Panc1 (cell line): ENCODE measurements at regions of chr2 and their contacts with region 1.

Region 1: DNA sequence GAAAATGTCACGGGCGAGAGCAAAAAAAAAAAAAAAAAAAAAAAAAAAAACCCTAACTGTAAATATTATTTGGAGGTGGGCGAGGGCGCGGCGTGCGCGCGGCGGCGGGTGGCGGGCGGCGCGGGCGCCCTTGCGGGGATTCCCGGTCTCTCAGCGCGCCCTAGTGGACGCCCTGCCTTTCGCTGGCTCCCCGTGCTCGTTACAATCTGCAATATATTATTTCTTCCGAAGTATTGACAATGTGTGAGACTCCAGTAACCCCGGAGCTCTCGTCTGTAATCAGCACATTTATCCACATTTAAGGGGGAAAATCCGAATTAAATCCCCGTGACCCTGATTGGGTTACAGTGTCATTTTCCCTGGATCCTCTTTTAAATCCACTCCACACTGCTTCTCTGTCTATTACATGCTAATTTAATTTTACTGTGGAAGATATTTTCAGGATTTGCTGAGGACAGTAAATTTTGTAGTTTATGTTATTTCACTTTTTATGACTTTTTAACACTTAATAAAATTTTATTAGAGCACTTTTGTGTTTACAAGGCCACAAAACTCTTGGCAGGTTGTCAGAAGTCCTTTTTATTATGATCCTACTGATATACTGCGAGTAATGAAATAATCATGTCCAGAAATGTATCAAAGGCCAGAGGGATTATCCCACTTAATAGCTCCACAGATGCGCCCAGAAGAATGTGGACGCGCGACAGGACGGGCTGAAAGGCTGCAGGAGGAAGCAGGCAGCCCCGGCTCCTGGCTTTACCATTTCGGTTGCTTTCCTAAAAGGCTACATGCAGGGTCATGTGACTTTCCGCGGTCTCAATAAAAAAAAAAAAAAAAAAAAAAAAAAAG is 369.1 kb downstream of the MTX2 start:
- DNase-seq: no peak
- ATAC-seq: peak; percentile 90
- H3K4me3 ChIP-seq: peak overlapping the region; percentile 65 to 66
- H3K27ac ChIP-seq: peak overlapping the region; percentile 79
- H3K4me1 ChIP-seq: no peaks in the 10 kb centered on the region
- H3K27me3 ChIP-seq: no peaks in the 10 kb centered on the region; the same call in 1 of the 2 replicates
- CTCF ChIP-seq: peak; percentile 92

Region 2: GRCh38 chr2:175523001-175523400 is 1115.4 kb before region 1 on chr2:
- CTCF ChIA-PET with region 1: no interaction called
- POLR2A ChIA-PET with region 1: no interaction called
- in situ Hi-C with region 1: no loop called
- intact Hi-C with region 1: no loop called
- DNase-seq: no peak
- ATAC-seq: no peak
- H3K4me3 ChIP-seq: no peak overlapping the region
- H3K27ac ChIP-seq: no peak overlapping the region
- H3K4me1 ChIP-seq: no peaks in the 10 kb centered on the region
- H3K27me3 ChIP-seq: no peaks in the 10 kb centered on the region
- CTCF ChIP-seq: no peak

Region 3: GRCh38 chr2:176135034-176135440 is 503.4 kb before region 1 on chr2:
- CTCF ChIA-PET with region 1: interaction called, 5 read pairs
- POLR2A ChIA-PET with region 1: interaction called, 22 read pairs
- in situ Hi-C with region 1: no loop called
- intact Hi-C with region 1: loop called (anchors 2 kb)
- DNase-seq: no peak
- ATAC-seq: no peak
- H3K4me3 ChIP-seq: no peak overlapping the region
- H3K27ac ChIP-seq: peak overlapping the region; percentile 77
- H3K4me1 ChIP-seq: peaks cover 15% of the 10 kb centered on the region
- H3K27me3 ChIP-seq: no peaks in the 10 kb centered on the region
- CTCF ChIP-seq: peak; percentile 29; the same call in 1 of the 2 replicates

Region 4: DNA sequence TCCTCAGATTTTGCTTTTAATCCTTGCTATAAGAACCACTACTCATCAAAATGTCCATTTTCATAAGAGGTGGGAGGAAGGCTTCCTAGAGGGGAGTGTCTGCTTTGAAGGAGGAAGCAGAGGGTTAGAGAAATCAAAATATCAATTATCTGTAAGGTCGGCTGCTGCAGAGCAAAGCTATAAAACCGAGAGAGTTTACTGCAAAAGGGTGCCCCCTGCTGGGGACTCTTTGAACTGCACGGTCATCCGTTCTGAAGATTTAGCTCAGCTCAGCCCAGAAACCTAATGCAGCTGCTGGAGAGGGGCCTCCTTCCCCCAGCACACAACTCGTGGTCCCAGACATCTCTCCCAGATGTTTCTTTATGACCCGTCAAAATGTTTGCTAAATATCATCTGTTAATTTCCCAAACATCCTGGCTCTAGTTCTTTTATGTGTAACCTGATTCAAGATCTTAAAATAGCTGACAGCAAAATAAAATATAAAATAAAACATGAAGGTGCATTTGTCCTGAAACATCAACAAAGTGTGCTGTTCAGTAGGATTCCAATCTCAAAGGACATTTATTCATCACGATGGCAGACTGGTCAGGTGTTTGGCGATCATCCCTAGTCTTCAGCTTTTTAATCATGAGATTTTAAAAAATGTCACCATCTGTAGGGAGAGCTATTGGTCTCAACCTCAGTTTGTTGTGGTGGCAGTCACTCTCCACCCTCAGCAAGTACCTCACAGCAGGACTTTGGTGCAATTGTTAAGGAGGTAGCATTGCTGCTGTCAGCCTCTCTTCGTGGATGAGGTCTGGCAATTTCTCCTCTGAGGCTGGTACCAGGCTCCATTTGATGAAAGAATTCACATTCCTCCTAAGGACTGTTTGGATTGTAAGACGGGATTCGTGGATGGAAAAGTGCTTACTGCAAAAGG is 183.2 kb before region 1 on chr2:
- CTCF ChIA-PET with region 1: no interaction called
- POLR2A ChIA-PET with region 1: no interaction called
- in situ Hi-C with region 1: no loop called
- intact Hi-C with region 1: loop called (anchors 5 kb)
- DNase-seq: peak; percentile 55
- ATAC-seq: peak; percentile 82
- H3K4me3 ChIP-seq: no peak overlapping the region
- H3K27ac ChIP-seq: no peak overlapping the region
- H3K4me1 ChIP-seq: no peaks in the 10 kb centered on the region
- H3K27me3 ChIP-seq: no peaks in the 10 kb centered on the region
- CTCF ChIP-seq: peak; percentile 91

Region 5: DNA sequence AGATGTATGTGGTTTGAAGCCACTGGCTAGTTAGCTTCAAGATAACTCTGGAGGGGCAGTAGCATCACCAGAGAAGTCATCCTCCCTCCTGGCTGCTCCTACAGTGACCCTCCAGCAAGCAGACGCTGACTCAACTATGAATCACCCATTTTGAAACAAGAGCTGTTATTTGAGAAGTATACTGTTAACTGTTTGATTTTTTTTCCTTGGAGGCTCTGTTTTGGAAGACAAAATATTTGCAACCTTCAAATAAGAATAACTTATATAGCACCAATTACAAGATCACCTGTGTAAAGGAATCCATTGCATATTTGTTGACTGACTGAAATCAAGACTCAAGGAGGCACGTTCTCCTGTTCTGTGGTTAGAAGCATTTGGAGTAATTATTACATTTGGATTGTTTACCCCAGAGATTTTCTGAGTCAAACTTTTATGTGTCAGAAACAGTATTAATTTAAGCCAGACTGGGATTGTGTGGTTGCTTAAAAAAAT is 55.4 kb before region 1 on chr2:
- CTCF ChIA-PET with region 1: interaction called, 11 read pairs
- POLR2A ChIA-PET with region 1: no interaction called
- in situ Hi-C with region 1: no loop called
- intact Hi-C with region 1: no loop called
- DNase-seq: peak; percentile 50
- ATAC-seq: peak; percentile 98
- H3K4me3 ChIP-seq: peak overlapping the region in 1 of 2 experiments; percentile 11; a peak in 1 of 4 replicates
- H3K27ac ChIP-seq: peak overlapping the region; percentile 49; the same call in 1 of the 2 replicates
- H3K4me1 ChIP-seq: peaks cover 24% of the 10 kb centered on the region
- H3K27me3 ChIP-seq: no peaks in the 10 kb centered on the region
- CTCF ChIP-seq: no peak

Region 6: GRCh38 chr2:176692533-176692932 is 54.1 kb after region 1 on chr2:
- CTCF ChIA-PET with region 1: no interaction called
- POLR2A ChIA-PET with region 1: no interaction called
- in situ Hi-C with region 1: no loop called
- intact Hi-C with region 1: no loop called
- DNase-seq: no peak
- ATAC-seq: no peak
- H3K4me3 ChIP-seq: no peak overlapping the region
- H3K27ac ChIP-seq: no peak overlapping the region
- H3K4me1 ChIP-seq: no peaks in the 10 kb centered on the region
- H3K27me3 ChIP-seq: no peaks in the 10 kb centered on the region; the same call in 1 of the 2 replicates
- CTCF ChIP-seq: no peak

Region 7: DNA sequence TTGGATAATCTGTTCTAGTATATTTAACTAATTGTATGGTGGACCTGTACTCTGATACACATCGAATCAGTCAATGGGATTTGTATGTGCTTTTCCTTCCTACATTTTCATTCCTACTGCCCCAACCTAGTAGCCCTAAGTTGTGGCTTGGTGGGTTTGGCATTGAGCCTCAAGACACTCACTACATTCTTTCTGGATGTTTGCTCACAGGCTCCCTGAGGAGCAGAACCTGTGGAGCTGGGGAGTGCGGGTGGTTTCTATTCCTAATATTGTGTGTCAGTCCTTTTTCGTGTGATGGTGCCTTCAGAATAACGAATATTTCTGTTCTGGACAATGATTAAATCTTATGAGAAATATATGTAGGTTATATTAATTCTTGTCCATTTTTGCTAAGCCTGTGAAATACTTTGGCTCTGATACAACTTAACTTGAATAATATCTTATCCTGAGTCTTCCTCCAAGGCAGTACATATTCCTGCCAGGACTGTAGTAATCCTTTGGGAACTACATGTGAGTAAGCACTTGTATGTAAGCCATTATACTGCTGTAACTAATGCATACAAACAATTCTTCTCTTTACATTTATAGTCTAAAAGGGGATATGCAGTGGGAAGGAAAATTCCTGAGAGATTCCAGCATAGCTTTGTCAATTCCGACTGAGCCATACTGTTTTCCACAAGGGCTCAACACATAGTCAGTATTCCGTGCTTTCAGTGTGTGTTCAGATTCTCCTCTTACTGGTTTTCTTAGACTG is 904.8 kb after region 1 on chr2:
- CTCF ChIA-PET with region 1: no interaction called
- POLR2A ChIA-PET with region 1: no interaction called
- in situ Hi-C with region 1: no loop called
- intact Hi-C with region 1: no loop called
- DNase-seq: no peak
- ATAC-seq: no peak
- H3K4me3 ChIP-seq: no peak overlapping the region
- H3K27ac ChIP-seq: no peak overlapping the region
- H3K4me1 ChIP-seq: no peaks in the 10 kb centered on the region
- H3K27me3 ChIP-seq: no peaks in the 10 kb centered on the region
- CTCF ChIP-seq: no peak